Endothelial cell of umbilical vein (primary cell): ENCODE measurements at regions of chr14 and their contacts with region 1.

Region 1: DNA sequence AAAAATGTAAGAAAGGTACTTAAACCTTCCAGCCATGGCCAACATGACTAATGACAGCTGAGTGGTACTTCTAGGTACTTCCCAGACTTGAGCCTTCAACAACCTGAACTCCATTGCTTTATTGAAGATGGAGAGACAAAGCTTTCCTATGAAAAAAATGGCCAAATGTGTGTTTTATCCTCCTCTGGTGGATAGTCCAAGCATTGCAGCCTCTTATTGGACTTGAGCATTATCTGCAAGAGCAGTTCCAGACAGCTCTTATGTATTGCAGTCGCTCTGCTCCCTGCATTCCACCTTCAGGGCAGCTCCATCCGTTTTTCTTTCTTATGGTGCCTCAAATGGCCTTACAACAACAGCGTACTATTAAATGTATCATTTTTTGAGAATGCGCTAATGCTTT is 588.2 kb downstream of the NRXN3 start:
- DNase-seq: peak; percentile 49
- H3K4me3 ChIP-seq: no peak overlapping the region
- H3K27ac ChIP-seq: no peak overlapping the region
- H3K4me1 ChIP-seq: no peaks in the 10 kb centered on the region
- H3K27me3 ChIP-seq: no peaks in the 10 kb centered on the region
- CTCF ChIP-seq: peak; percentile 29 to 54
- POLR2A ChIP-seq: no peak

Region 2: DNA sequence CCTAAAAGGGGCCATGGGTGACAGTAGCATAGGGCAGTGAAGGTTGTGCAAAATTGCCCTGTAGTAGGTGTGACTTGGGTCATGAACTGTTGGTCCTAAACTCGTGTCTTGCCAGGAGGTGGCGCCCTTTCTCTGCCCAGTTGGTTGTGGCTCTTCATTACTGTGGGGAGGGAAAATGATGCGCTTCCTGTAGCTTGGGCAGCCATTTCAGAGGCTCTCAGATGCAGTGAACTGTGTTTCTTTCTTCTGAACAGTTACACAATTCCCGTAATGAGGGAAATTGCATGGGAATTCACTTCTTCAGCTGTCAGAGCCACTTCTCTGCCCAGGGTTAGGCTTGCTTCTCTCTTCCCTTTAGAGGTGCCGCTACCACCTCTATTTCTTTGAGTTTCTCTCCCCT is 736.3 kb before region 1 on chr14:
- CTCF ChIA-PET with region 1: interaction called, 3 read pairs
- POLR2A ChIA-PET with region 1: no interaction called
- dilution Hi-C with region 1: no loop called
- intact Hi-C with region 1: loop called (anchors 5 kb)
- DNase-seq: peak; percentile 44
- H3K4me3 ChIP-seq: no peak overlapping the region
- H3K27ac ChIP-seq: no peak overlapping the region
- H3K4me1 ChIP-seq: no peaks in the 10 kb centered on the region
- H3K27me3 ChIP-seq: no peaks in the 10 kb centered on the region
- CTCF ChIP-seq: peak; percentile 54 to 61
- POLR2A ChIP-seq: no peak

Region 3: GRCh38 chr14:78700236-78700635 is 58.1 kb before region 1 on chr14:
- CTCF ChIA-PET with region 1: no interaction called
- POLR2A ChIA-PET with region 1: no interaction called
- dilution Hi-C with region 1: no loop called
- intact Hi-C with region 1: no loop called
- DNase-seq: no peak
- H3K4me3 ChIP-seq: no peak overlapping the region
- H3K27ac ChIP-seq: no peak overlapping the region
- H3K4me1 ChIP-seq: no peaks in the 10 kb centered on the region
- H3K27me3 ChIP-seq: no peaks in the 10 kb centered on the region
- CTCF ChIP-seq: peak in 1 of 2 donors; percentile 2
- POLR2A ChIP-seq: no peak

Region 4: GRCh38 chr14:78921856-78922255 is 163.5 kb after region 1 on chr14:
- CTCF ChIA-PET with region 1: no interaction called
- POLR2A ChIA-PET with region 1: no interaction called
- dilution Hi-C with region 1: no loop called
- intact Hi-C with region 1: no loop called
- DNase-seq: peak; percentile 92
- H3K4me3 ChIP-seq: peak overlapping the region in 1 of 3 experiments; percentile 19
- H3K27ac ChIP-seq: peak overlapping the region; percentile 82
- H3K4me1 ChIP-seq: peaks cover 33% of the 10 kb centered on the region
- H3K27me3 ChIP-seq: no peaks in the 10 kb centered on the region
- CTCF ChIP-seq: no peak
- POLR2A ChIP-seq: peak; percentile 61